Lower lobe of right lung (tissue), 2 donors: ENCODE measurements at regions of chr14 and their contacts with region 1.

Region 1: GRCh38 chr14:24241829-24242443 is 487 bp downstream of the TINF2 start:
- DNase-seq: peak; percentile 96
- ATAC-seq: peak; percentile 95 to 96
- H3K4me3 ChIP-seq: peak overlapping the region; percentile 73
- H3K27ac ChIP-seq: peak overlapping the region; percentile 99
- H3K4me1 ChIP-seq: peaks cover 47% of the 10 kb centered on the region
- H3K27me3 ChIP-seq: no peaks in the 10 kb centered on the region
- CTCF ChIP-seq: peak; percentile 64

Region 2: DNA sequence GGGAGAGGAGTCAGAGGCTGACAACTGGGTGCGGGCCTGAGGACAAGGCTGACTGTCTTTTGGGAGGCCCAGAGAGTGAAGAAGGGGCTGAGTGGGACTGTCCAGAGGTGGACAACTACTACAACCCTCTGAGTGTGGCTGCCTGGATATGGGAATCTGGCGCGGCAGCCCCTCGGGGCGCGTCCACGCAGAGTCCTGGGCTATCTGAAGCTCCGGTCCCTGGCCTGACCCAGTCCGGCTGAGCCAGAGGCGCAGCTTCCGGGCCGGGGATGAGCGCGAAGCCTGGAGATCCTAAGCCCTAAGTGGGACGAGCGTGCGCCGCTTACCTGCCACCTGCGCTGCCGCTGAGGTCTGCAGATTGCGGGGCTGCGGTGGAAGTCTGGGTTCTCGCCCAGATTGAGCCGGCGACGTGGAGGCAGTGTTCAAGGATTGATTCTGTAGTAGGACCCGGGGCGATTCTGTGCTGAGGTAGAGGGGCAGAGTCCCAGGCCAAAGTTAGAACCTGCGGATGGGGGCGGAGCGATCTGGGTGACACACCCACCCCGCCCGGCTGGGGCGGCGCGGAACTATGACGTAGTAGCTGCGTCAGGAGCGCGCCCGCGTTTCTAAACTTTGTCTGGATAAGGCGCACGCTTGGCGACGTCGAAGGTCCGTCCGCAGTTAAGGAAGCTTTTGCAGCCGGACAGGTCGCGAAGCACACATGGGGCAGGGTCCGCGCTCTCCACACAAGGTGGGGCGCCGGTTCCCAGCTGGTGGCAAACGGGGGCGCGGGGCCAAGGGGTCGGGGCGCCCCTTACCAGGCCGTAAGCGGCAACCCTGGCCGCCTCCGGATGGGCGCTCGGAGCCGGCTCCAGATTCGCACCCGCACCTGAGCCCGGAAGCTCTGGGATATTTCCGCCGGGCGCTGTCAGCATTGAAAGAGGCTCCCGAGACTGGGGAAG is 57.6 kb after region 1 on chr14 and contains the starts of genes DHRS1 and NOP9:
- intact Hi-C with region 1: loop called (anchors 10 kb)
- DNase-seq: peak; percentile 94
- ATAC-seq: peak; percentile 94 to 95
- H3K4me3 ChIP-seq: peak within 1 kb of the TSS; percentile 99
- H3K27ac ChIP-seq: peak within 1 kb of the TSS; percentile 92
- H3K4me1 ChIP-seq: peaks cover 31% of the 10 kb centered on the region
- H3K27me3 ChIP-seq: no peaks in the 10 kb centered on the region
- CTCF ChIP-seq: no peak
- total RNA-seq, gene DHRS1: 22.7 TPM
- total RNA-seq, gene NOP9: 22.0 TPM

Region 3: GRCh38 chr14:24411443-24412389 is 169.8 kb after region 1 on chr14:
- intact Hi-C with region 1: no loop called
- DNase-seq: no peak
- ATAC-seq: peak; percentile 53 to 62
- H3K4me3 ChIP-seq: no peak overlapping the region
- H3K27ac ChIP-seq: no peak overlapping the region
- H3K4me1 ChIP-seq: no peaks in the 10 kb centered on the region
- H3K27me3 ChIP-seq: no peaks in the 10 kb centered on the region
- CTCF ChIP-seq: peak; percentile 74